Activated B cell treated with CpG ODN at 0.5 μM for 24 hours (primary cell): ENCODE measurements at regions of chr19 and their contacts with region 1.

Region 1: GRCh38 chr19:37906869-37907734 is at the start of gene SIPA1L3:
- DNase-seq: peak; percentile 89
- ATAC-seq: peak; percentile 92
- H3K4me3 Mint-ChIP-seq: peak within 1 kb of the TSS; percentile 86
- H3K27ac Mint-ChIP-seq: peak within 1 kb of the TSS; percentile 94
- H3K4me1 Mint-ChIP-seq: peaks cover 61% of the 10 kb centered on the region
- H3K27me3 Mint-ChIP-seq: no peaks in the 10 kb centered on the region
- CTCF ChIP-seq: no peak
- total RNA-seq, gene SIPA1L3: 120 and 145 TPM in 2 replicates

Region 2: GRCh38 chr19:37963190-37963936 is 56.3 kb after region 1 on chr19:
- CTCF ChIA-PET with region 1: interaction called, 3 read pairs
- POLR2A ChIA-PET with region 1: interaction called, 13 read pairs
- intact Hi-C with region 1: loop called (anchors 1 kb)
- DNase-seq: no peak
- ATAC-seq: no peak
- H3K4me3 Mint-ChIP-seq: peak overlapping the region; percentile 4
- H3K27ac Mint-ChIP-seq: peak overlapping the region; percentile 88
- H3K4me1 Mint-ChIP-seq: peaks cover 80% of the 10 kb centered on the region
- H3K27me3 Mint-ChIP-seq: no peaks in the 10 kb centered on the region
- CTCF ChIP-seq: no peak

Region 3: DNA sequence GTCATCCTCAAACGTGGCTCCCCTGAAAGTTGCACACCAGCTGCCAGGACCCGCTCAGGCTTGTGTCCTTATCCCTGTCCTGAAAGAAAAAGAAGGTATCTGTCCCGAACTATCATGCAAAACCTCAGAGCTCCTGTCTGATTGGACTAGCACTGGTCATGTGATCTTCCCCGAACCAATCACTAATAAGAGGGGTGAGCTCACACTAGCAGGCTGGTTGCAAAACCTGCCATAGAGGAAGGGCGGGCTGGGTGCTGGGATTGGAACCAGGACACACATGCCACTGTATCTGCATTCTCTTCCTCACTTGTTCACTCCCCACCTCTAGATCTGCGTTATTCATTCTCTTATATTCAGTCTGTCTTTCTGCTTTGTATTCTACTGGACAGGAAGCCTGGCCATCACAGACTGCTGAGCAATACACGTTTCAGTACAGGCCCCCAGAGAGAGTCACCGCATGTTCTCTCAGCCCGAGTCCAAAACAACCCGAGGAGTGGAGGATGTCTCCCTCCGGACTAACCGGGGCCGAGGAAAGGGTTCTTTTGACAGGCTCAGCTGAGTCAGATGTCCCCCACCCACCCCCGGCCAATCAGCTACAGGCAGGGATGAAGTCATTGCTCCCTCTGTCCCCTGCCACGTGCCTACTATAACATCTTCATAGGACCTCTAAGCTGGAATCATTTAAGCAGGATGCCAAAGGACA is 97.6 kb after region 1 on chr19:
- CTCF ChIA-PET with region 1: interaction called, 11 read pairs
- POLR2A ChIA-PET with region 1: interaction called, 42 read pairs
- intact Hi-C with region 1: no loop called
- DNase-seq: peak; percentile 34
- ATAC-seq: peak; percentile 60
- H3K4me3 Mint-ChIP-seq: no peak overlapping the region
- H3K27ac Mint-ChIP-seq: no peak overlapping the region
- H3K4me1 Mint-ChIP-seq: peaks cover 39% of the 10 kb centered on the region
- H3K27me3 Mint-ChIP-seq: no peaks in the 10 kb centered on the region
- CTCF ChIP-seq: no peak

Region 4: DNA sequence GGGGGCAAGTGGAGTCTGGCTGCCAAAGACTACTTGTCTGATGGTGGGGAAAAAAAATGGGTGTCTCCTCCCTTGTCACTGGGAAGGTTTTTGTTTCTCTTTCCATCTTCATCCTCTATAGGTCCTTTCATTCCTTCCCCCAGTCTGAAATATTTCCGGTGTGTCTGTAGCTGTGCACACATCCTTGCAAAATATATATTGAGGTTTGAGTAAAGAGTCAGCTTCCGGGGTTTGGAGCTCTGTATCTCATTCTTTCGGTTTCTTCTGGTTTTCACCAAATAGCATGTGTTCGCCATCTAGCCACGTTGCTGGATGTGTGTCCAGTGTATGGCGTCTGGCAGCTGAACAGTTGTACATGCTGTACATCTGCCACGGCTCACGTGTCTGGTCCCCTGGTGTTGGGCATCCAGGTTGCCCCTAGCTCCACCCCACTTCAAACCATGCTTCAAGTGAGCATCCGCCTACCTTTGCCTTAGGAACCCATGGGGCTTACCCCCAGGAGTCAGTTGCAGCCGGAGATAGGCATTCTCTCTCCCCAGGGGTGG is 142.1 kb after region 1 on chr19:
- CTCF ChIA-PET with region 1: interaction called, 77 read pairs
- POLR2A ChIA-PET with region 1: interaction called, 113 read pairs
- intact Hi-C with region 1: loop called (anchors 1 kb)
- DNase-seq: peak; percentile 55
- ATAC-seq: peak; percentile 37
- H3K4me3 Mint-ChIP-seq: peak overlapping the region; percentile 79
- H3K27ac Mint-ChIP-seq: peak overlapping the region; percentile 99
- H3K4me1 Mint-ChIP-seq: peaks cover 75% of the 10 kb centered on the region
- H3K27me3 Mint-ChIP-seq: no peaks in the 10 kb centered on the region
- CTCF ChIP-seq: no peak

Region 5: GRCh38 chr19:38115271-38115802 is 208.2 kb after region 1 on chr19:
- CTCF ChIA-PET with region 1: interaction called, 12 read pairs
- POLR2A ChIA-PET with region 1: interaction called, 3 read pairs
- intact Hi-C with region 1: no loop called
- DNase-seq: no peak
- ATAC-seq: peak; percentile 28
- H3K4me3 Mint-ChIP-seq: no peak overlapping the region
- H3K27ac Mint-ChIP-seq: peak overlapping the region; percentile 62
- H3K4me1 Mint-ChIP-seq: peaks cover 12% of the 10 kb centered on the region
- H3K27me3 Mint-ChIP-seq: no peaks in the 10 kb centered on the region
- CTCF ChIP-seq: no peak

Region 6: GRCh38 chr19:38224014-38224862 is 317.1 kb after region 1 on chr19 and contains the start of gene DPF1:
- CTCF ChIA-PET with region 1: no interaction called
- POLR2A ChIA-PET with region 1: interaction called, 6 read pairs
- intact Hi-C with region 1: loop called (anchors 1 kb)
- DNase-seq: peak; percentile 64
- ATAC-seq: peak; percentile 88
- H3K4me3 Mint-ChIP-seq: peak within 1 kb of the TSS; percentile 85
- H3K27ac Mint-ChIP-seq: peak within 1 kb of the TSS; percentile 66
- H3K4me1 Mint-ChIP-seq: peaks cover 35% of the 10 kb centered on the region
- H3K27me3 Mint-ChIP-seq: peaks cover 52% of the 10 kb centered on the region
- CTCF ChIP-seq: no peak
- total RNA-seq, gene DPF1: not detected in 2 replicates

Region 7: GRCh38 chr19:38618590-38619360 is 711.7 kb after region 1 on chr19 and contains the start of gene EIF3K:
- CTCF ChIA-PET with region 1: no interaction called
- POLR2A ChIA-PET with region 1: no interaction called
- intact Hi-C with region 1: loop called (anchors 1 kb)
- DNase-seq: peak; percentile 97
- ATAC-seq: peak; percentile 28
- H3K4me3 Mint-ChIP-seq: peak within 1 kb of the TSS; percentile 100
- H3K27ac Mint-ChIP-seq: peak within 1 kb of the TSS; percentile 97
- H3K4me1 Mint-ChIP-seq: peaks cover 53% of the 10 kb centered on the region
- H3K27me3 Mint-ChIP-seq: no peaks in the 10 kb centered on the region
- CTCF ChIP-seq: no peak
- total RNA-seq, gene EIF3K: 344 and 385 TPM in 2 replicates